ENCODE measurements at regions of chr19 and their contacts with region 1.

Region 1: GRCh38 chr19:34943861-34944573 is 17.3 kb downstream of the ZNF30 start:
- DNase-seq: no peak

Region 2: GRCh38 chr19:34327851-34328250 is 616.2 kb before region 1 on chr19:
- intact Hi-C with region 1: loop called in 1 of 2 experiments (anchors 5 kb)
- DNase-seq: no peak

Region 3: DNA sequence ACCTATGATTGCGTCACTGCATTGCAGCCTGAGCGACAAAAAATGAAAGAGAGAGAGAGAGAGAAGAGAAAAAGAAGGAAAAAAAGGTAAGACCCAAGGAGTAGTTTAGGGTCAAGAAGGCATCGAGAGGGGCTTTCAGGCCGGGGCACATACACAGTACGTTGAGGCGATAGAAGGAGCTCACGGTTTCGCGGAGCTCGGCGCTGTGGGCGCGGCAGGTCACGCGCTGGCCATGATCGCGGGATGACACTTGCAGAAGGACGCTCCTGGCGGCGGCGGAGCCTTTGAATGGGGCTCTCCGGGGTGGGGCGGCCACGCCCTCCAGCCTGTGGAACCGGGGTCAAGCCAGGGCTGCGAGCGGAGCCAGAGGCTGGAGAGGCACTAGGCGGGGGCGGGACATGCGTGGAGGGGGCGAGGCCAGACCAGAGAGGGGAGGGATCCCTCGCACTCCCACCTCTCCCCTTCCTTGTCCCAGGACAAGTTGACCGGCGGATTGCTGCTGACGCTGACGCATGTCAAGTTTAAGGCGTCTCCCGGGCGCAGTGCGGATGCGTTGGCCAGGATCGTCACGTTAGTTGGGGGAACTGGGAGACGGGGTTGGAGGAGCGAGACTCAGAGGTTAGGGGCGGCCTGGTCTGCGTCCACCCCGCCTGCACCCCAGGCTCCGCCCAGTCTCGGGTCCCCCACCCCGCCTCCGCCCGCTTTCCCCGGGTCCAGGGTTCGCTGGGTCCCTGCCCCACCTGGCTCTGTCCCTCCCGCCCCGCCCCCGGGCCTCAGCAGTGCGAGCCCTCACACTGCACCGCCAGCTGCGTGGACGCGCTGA is 901.4 kb after region 1 on chr19:
- intact Hi-C with region 1: no loop called
- DNase-seq: peak; percentile 83